ENCODE measurements at regions of chr13 and their contacts with region 1.

Region 1: GRCh38 chr13:90984756-90985155 is 362.7 kb upstream of the MIR17HG start:
- DNase-seq: no peak
- H3K4me3 ChIP-seq: no peak overlapping the region
- H3K27ac ChIP-seq: no peak overlapping the region
- H3K4me1 ChIP-seq: no peaks in the 10 kb centered on the region
- CTCF ChIP-seq: no peak

Region 2: DNA sequence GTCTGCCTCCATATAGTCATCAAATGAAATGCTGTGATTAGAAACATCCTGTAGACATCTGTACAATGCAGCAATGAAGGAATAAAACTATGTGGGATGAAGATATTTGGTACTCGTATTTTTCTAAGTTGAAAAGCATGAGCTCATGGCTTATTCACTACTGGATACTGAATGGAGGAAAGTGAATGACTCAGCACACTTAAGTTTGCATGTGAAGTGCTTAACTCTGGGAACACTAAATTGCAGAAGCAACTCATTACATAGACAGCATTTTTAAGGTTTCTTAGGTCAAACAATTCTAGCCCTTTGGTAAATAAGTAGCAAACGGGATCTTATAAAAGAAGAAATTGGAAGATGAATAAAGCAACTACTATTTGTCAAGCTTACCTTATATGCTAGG is 66.2 kb before region 1 on chr13:
- CTCF ChIA-PET with region 1: no interaction called
- POLR2A ChIA-PET with region 1: no interaction called
- intact Hi-C with region 1: no loop called
- DNase-seq: no peak
- H3K4me3 ChIP-seq: no peak overlapping the region
- H3K27ac ChIP-seq: no peak overlapping the region
- H3K4me1 ChIP-seq: no peaks in the 10 kb centered on the region
- CTCF ChIP-seq: no peak

Region 3: DNA sequence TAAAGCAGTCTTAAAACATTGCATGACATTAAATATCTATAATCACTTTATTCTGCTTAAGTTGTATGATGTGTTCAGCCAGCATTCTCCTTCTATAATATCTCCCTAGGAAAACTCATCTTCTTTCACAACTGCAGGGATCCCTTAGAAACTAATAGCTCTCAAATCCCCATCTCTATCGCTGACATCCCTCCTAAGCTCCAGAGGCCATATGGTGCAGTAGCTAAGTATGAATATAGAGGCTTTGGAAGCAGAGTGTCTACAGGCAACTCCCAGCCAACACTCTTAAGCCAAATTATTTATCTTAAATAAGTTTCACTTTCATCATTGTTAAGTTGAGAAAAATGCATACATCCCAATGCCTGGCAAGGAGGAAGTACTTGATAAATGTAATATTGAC is 13.2 kb after region 1 on chr13:
- CTCF ChIA-PET with region 1: no interaction called
- POLR2A ChIA-PET with region 1: interaction called, 11 read pairs
- intact Hi-C with region 1: no loop called
- DNase-seq: no peak
- H3K4me3 ChIP-seq: no peak overlapping the region
- H3K27ac ChIP-seq: no peak overlapping the region
- H3K4me1 ChIP-seq: no peaks in the 10 kb centered on the region
- CTCF ChIP-seq: no peak

Measured in OCI-LY7 (cell line).